ENCODE measurements at regions of chr4 and their contacts with region 1.

Region 1: DNA sequence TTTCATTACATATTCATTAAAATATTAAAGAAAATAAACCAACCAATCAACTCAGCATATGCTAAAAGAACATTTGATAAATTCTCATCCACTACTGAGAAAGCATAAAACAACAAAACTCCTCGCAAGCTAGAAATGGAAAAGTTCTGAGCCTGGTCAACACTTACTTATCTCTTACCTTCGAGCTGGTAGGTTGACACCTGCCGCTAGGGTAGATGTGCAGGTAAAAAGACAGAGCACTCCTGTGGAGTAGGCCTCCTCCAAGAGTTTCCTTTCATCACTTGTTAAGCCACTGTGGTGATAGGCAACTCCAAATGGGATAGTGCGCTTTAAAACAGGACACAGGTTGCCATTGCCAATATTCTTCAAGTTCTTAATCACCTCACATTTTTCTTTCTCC is 18.9 kb downstream of the HELQ start:
- DNase-seq: no peak
- H3K4me3 ChIP-seq: no peak overlapping the region
- H3K27ac ChIP-seq: no peak overlapping the region
- H3K4me1 ChIP-seq: no peaks in the 10 kb centered on the region
- H3K27me3 ChIP-seq: no peaks in the 10 kb centered on the region
- CTCF ChIP-seq: no peak

Region 2: GRCh38 chr4:83356899-83357661 is 79.6 kb before region 1 on chr4:
- CTCF ChIA-PET with region 1: no interaction called
- POLR2A ChIA-PET with region 1: interaction called, 17 read pairs
- intact Hi-C with region 1: no loop called
- DNase-seq: peak; percentile 43
- H3K4me3 ChIP-seq: no peak overlapping the region
- H3K27ac ChIP-seq: no peak overlapping the region
- H3K4me1 ChIP-seq: no peaks in the 10 kb centered on the region
- H3K27me3 ChIP-seq: no peaks in the 10 kb centered on the region
- CTCF ChIP-seq: no peak

Region 3: DNA sequence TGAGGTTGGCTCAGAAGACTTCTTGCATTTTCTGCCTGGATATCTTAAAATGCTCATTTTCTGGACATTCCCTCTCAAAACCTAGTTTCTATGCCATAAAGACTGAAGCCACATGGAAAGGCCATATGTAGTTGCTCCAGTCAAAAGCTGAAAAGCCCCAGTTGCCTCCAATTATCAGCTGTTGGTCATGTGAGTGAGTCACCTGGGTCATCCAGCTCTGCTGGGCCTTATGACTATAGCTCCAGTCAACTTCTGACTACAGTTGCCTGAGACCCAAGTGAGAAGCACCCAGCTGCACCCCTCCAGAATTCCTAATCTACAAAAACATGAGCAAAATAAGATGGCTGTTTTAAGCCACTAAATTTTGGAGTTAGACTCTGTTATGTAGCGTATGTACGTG is 23.0 kb before region 1 on chr4:
- CTCF ChIA-PET with region 1: no interaction called
- POLR2A ChIA-PET with region 1: no interaction called
- intact Hi-C with region 1: no loop called
- DNase-seq: no peak
- H3K4me3 ChIP-seq: no peak overlapping the region
- H3K27ac ChIP-seq: no peak overlapping the region
- H3K4me1 ChIP-seq: no peaks in the 10 kb centered on the region
- H3K27me3 ChIP-seq: no peaks in the 10 kb centered on the region
- CTCF ChIP-seq: no peak